HepG2 (cell line): ENCODE measurements at regions of chr5 and their contacts with region 1.

Region 1: DNA sequence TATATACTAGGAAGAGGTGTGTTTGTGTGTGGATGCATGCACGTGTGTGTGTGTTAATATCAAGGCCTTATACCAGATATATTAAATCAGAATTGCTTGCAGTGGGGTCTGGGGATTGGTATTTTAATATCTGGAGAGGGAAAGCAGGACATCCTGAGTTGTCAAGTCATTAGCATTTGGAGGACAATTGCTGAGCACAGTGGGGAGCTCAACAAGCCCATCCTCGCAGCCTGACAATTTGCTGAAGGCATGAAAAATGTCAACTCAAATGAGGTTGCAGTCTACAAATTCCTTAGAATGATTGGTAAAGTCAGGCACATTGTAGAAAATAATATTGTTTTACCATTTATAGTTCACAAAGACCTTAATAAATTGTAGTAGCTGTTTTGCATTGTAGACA is 627.4 kb downstream of the LRRC70 start:
- DNase-seq: no peak
- ATAC-seq: no peak
- H3K4me3 ChIP-seq: no peak overlapping the region
- H3K27ac ChIP-seq: no peak overlapping the region
- H3K4me1 ChIP-seq: no peaks in the 10 kb centered on the region
- H3K27me3 ChIP-seq: no peaks in the 10 kb centered on the region
- CTCF ChIP-seq: no peak
- EP300 ChIP-seq: no peak
- POLR2A ChIP-seq: no peak
- RAD21 ChIP-seq: no peak

Region 2: GRCh38 chr5:63175850-63176249 is 30.1 kb before region 1 on chr5:
- CTCF ChIA-PET with region 1: no interaction called
- POLR2A ChIA-PET with region 1: no interaction called
- in situ Hi-C with region 1: no loop called
- intact Hi-C with region 1: loop called (anchors 1 kb)
- DNase-seq: no peak
- ATAC-seq: no peak
- H3K4me3 ChIP-seq: no peak overlapping the region
- H3K27ac ChIP-seq: no peak overlapping the region
- H3K4me1 ChIP-seq: no peaks in the 10 kb centered on the region
- H3K27me3 ChIP-seq: no peaks in the 10 kb centered on the region
- CTCF ChIP-seq: no peak
- EP300 ChIP-seq: no peak
- POLR2A ChIP-seq: no peak
- RAD21 ChIP-seq: no peak